ENCODE measurements at regions of chr1 and their contacts with region 1.

Region 1: GRCh38 chr1:207108998-207109397 is 5.0 kb downstream of the C4BPA start:
- DNase-seq: no peak
- H3K4me3 ChIP-seq: no peak overlapping the region
- H3K27ac ChIP-seq: no peak overlapping the region
- H3K27me3 ChIP-seq: peaks cover 0 to 4% (median 0%) of the 10 kb centered on the region in 45 donors
- CTCF ChIP-seq: no peak

Region 2: GRCh38 chr1:206839857-206840256 is 269.1 kb before region 1 on chr1:
- intact Hi-C with region 1: no loop called
- DNase-seq: no peak
- H3K4me3 ChIP-seq: no peak overlapping the region
- H3K27ac ChIP-seq: no peak overlapping the region
- H3K27me3 ChIP-seq: peaks cover 0 to 23% (median 0%) of the 10 kb centered on the region in 45 donors
- CTCF ChIP-seq: no peak

Region 3: DNA sequence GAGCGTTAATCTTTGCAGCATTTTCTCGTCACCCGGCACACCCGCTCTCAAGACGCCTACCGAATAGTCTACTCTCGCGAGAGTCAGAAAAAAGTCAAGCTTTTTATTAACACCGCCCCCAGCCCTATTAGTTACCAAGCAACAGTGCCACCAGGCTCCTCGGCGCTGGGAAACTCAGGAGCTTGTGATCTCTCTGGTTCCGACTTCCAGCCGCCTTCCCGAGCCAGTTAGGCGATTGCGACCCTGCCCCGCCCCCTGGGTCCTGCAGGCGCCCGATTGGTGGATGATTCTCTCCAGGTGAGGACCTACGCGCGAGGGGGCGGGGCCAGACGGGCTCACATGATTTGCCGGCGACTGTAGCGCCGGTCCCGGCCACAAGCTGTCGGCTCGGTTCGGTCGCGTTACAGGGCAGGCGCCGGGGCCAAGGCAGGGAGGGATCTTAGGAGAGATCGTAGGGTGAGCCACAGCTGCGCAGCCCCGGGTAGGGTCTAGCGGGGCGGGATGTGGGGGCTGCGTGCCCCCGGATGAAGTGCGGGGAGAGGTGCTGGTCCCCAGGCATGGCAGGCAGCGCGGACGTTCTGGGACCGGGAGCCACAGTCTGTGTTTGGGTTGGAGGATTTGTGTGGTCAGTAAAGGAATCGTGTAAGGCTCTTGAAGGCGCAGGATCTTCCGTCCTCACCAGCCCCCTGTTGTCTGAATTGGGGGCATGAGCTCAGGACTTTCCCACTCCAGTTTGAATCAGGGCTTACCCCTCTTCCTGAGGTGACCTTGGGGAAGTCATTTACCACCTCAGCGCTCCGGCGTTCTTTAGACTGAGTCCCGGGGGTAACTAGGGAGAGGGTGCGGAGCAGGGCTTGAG is 55.9 kb before region 1 on chr1 and contains the start of gene PFKFB2:
- intact Hi-C with region 1: no loop called
- DNase-seq: peak; percentile 92 to 99 (median 98)
- H3K4me3 ChIP-seq: peak within 1 kb of the TSS; percentile 58 to 99 (median 81)
- H3K27ac ChIP-seq: peak within 1 kb of the TSS; percentile 55 to 98 (median 93)
- H3K27me3 ChIP-seq: no peaks in the 10 kb centered on the region
- CTCF ChIP-seq: peak in 42 of 56 donors; percentile 10 to 60 (median 37)
- total RNA-seq, gene PFKFB2: 18.5 to 126 (median 47.9) TPM

Region 4: GRCh38 chr1:207134581-207134980 is 25.6 kb after region 1 on chr1:
- intact Hi-C with region 1: loop called in 1 of 2 experiments (anchors 2 kb)
- DNase-seq: no peak
- H3K4me3 ChIP-seq: no peak overlapping the region
- H3K27ac ChIP-seq: no peak overlapping the region
- H3K27me3 ChIP-seq: no peaks in the 10 kb centered on the region
- CTCF ChIP-seq: no peak

Measured in dorsolateral prefrontal cortex (tissue), 120 donors.